ENCODE measurements at regions of chr4 and their contacts with region 1.

Region 1: DNA sequence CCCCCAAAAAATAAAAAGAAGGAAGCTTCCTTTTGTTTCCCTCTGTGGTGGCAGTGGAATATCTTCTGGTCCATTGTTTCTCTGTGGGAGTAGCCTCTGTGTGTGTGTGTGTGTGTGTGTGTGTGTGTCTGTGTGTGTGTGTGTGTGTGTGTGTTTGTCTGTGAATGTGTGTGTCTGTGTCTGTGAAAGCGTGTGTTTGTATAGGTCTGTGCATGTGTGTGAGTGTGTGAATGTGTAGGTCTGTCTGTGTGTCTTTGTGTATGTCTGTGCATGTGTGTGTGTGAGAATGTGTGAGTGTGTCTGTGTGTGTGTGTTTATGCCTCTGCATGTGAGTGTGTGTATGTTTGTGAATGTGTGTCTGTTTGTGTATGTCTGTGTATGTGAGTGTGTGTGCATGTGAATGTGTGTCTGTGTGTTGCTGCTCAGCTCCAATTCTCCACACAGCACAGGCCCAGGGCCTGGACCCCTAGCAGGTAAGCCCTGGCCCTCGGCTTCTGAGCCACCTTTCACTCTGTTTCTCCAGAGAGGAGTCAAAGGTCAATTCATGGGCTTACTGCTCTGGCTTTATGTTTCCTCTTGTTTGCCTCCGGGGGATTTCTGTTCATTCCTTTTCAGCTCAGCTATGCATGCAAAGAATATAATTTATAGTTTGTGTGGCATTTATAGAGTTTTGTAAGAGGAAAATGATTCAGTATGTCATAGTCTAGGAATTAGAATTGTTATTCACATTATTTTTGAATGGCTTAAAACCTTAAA is 89.8 kb downstream of the UCHL1 start:
- DNase-seq: no peak
- H3K4me3 ChIP-seq: no peak overlapping the region
- CTCF ChIP-seq: no peak

Region 2: DNA sequence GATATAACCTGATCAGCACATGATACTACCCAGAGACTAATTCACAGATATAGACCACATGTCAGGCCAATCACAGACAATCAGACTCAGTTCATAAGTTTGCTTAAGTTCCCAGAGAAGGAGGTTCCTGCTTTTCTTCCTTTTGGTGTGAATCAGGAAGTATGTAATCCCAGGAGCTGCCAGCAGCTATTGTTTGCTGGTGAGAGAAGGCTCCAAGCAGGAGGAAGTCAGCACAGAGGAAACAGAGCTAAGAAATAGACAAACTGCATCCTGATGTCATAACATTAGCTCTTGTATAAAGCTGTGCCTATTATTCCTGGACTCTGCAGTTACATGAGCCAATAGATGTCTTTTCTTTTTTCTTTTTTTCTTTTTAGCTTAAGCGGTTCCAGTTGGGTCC is 38.8 kb before region 1 on chr4:
- in situ Hi-C with region 1: no loop called
- DNase-seq: no peak
- H3K4me3 ChIP-seq: no peak overlapping the region
- CTCF ChIP-seq: no peak

Region 3: GRCh38 chr4:41384992-41385391 is 38.5 kb after region 1 on chr4:
- in situ Hi-C with region 1: loop called (anchors 5 kb)
- DNase-seq: no peak
- H3K4me3 ChIP-seq: no peak overlapping the region
- CTCF ChIP-seq: no peak

Measured in astrocyte of the cerebellum (primary cell).